Activated T-helper 2 cell treated with anti-CD3 and anti-CD28 coated beads, Interferon-gamma antibody, Interleukin-2, Interleukin-4, amounts not matched to agents 10 μg/mL and 5 μg/mL and 100 μg/mL, durations not matched to agents 14 hours and 24 hours and 36 hours (primary cell): ENCODE measurements at regions of chr5 and their contacts with region 1.

Region 1: GRCh38 chr5:87121304-87122150 is 146.2 kb upstream of the RASA1 start:
- DNase-seq: peak; percentile 37
- H3K4me3 Mint-ChIP-seq: peak overlapping the region; percentile 28
- H3K27ac Mint-ChIP-seq: peak overlapping the region; percentile 59
- H3K4me1 Mint-ChIP-seq: peaks cover 58% of the 10 kb centered on the region
- H3K27me3 Mint-ChIP-seq: no peaks in the 10 kb centered on the region

Region 2: DNA sequence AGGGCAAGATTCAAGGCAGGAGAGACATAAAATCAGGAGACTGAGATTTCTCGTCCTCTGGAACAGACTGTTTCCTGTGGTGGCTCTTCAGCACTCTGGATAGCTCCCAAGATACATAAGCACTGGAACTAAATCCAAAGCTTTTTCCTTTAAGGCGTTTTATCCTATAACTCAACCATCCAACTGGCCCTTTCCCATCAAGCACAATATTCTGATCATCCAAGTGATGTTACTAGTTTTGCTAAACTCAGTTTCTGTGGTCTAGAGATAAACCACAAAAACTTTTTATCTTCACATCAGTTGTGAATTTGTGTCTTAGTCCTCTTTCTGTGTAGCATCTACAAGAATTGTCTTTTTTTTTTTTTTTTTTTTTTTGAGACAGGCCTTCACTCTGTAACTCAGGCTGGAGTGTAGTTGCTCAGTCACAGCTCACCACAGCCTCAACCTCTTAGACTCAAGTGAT is 204.4 kb before region 1 on chr5:
- intact Hi-C with region 1: loop called (anchors 5 kb)
- DNase-seq: peak; percentile 8
- H3K4me3 Mint-ChIP-seq: no peak overlapping the region
- H3K27ac Mint-ChIP-seq: no peak overlapping the region
- H3K4me1 Mint-ChIP-seq: peaks cover 19% of the 10 kb centered on the region
- H3K27me3 Mint-ChIP-seq: peaks cover 27% of the 10 kb centered on the region

Region 3: GRCh38 chr5:87081511-87082372 is 39.8 kb before region 1 on chr5:
- intact Hi-C with region 1: loop called (anchors 2 kb)
- DNase-seq: peak; percentile 30
- H3K4me3 Mint-ChIP-seq: peak overlapping the region; percentile 41
- H3K27ac Mint-ChIP-seq: peak overlapping the region; percentile 54
- H3K4me1 Mint-ChIP-seq: peaks cover 41% of the 10 kb centered on the region
- H3K27me3 Mint-ChIP-seq: no peaks in the 10 kb centered on the region

Region 4: DNA sequence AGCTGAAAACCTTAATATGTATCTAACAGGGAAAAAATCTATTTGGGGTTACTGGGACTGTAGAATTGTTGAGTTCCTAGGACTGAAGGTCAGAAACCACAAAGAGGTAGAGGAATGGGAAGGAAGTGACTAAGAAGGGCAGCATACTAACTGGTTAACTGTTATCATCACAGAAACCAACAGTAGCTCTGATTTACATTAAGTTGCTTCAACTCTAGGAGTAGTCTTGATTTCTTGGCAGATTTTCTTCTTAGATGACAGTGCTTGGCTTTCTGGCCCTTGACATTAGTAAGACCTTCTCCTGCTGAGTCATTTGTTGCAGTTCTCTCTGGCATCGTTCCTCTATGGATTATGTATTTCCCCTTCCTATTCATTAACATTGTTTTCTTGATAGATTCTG is 30.0 kb after region 1 on chr5:
- intact Hi-C with region 1: no loop called
- DNase-seq: no peak
- H3K4me3 Mint-ChIP-seq: no peak overlapping the region
- H3K27ac Mint-ChIP-seq: no peak overlapping the region
- H3K4me1 Mint-ChIP-seq: peaks cover 8% of the 10 kb centered on the region
- H3K27me3 Mint-ChIP-seq: peaks cover 4% of the 10 kb centered on the region

Region 5: DNA sequence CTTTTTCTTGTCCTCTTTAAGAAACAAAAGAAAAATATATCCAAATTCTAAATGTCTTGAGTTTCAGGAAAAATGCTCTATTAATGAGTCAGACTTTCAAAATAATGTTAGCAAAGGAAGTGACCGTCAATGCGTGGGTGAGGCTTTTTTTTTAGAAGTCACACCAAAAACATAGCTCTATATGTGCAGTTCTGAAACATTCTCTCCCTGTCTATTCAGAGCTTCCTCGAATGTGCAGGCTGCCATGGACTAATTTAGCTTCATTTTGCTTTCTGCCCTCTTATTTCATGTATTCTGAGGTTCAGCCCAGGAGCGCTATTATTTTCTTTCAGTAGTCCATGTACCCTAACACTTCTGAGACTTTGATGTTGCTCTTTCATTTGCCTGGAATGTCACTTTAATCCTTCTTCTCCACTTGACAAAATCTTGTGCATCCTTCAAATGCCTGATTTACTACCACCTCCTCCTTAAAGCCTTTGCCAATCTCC is 73.6 kb after region 1 on chr5:
- intact Hi-C with region 1: loop called (anchors 5 kb)
- DNase-seq: no peak
- H3K4me3 Mint-ChIP-seq: peak overlapping the region; percentile 4
- H3K27ac Mint-ChIP-seq: no peak overlapping the region
- H3K4me1 Mint-ChIP-seq: peaks cover 26% of the 10 kb centered on the region
- H3K27me3 Mint-ChIP-seq: no peaks in the 10 kb centered on the region

Region 6: GRCh38 chr5:87340716-87341115 is 219.2 kb after region 1 on chr5:
- intact Hi-C with region 1: loop called (anchors 2 kb)
- DNase-seq: no peak
- H3K4me3 Mint-ChIP-seq: peak overlapping the region; percentile 64
- H3K27ac Mint-ChIP-seq: peak overlapping the region; percentile 82
- H3K4me1 Mint-ChIP-seq: peaks cover 27% of the 10 kb centered on the region
- H3K27me3 Mint-ChIP-seq: no peaks in the 10 kb centered on the region

Region 7: GRCh38 chr5:87432460-87432859 is 310.9 kb after region 1 on chr5:
- intact Hi-C with region 1: no loop called
- DNase-seq: no peak
- H3K4me3 Mint-ChIP-seq: no peak overlapping the region
- H3K27ac Mint-ChIP-seq: no peak overlapping the region
- H3K4me1 Mint-ChIP-seq: no peaks in the 10 kb centered on the region
- H3K27me3 Mint-ChIP-seq: peaks cover 8% of the 10 kb centered on the region

Region 8: GRCh38 chr5:87499478-87500410 is 378.2 kb after region 1 on chr5:
- intact Hi-C with region 1: no loop called
- DNase-seq: no peak
- H3K4me3 Mint-ChIP-seq: no peak overlapping the region
- H3K27ac Mint-ChIP-seq: no peak overlapping the region
- H3K4me1 Mint-ChIP-seq: no peaks in the 10 kb centered on the region
- H3K27me3 Mint-ChIP-seq: no peaks in the 10 kb centered on the region